ENCODE measurements at regions of chr2 and their contacts with region 1.

Region 1: DNA sequence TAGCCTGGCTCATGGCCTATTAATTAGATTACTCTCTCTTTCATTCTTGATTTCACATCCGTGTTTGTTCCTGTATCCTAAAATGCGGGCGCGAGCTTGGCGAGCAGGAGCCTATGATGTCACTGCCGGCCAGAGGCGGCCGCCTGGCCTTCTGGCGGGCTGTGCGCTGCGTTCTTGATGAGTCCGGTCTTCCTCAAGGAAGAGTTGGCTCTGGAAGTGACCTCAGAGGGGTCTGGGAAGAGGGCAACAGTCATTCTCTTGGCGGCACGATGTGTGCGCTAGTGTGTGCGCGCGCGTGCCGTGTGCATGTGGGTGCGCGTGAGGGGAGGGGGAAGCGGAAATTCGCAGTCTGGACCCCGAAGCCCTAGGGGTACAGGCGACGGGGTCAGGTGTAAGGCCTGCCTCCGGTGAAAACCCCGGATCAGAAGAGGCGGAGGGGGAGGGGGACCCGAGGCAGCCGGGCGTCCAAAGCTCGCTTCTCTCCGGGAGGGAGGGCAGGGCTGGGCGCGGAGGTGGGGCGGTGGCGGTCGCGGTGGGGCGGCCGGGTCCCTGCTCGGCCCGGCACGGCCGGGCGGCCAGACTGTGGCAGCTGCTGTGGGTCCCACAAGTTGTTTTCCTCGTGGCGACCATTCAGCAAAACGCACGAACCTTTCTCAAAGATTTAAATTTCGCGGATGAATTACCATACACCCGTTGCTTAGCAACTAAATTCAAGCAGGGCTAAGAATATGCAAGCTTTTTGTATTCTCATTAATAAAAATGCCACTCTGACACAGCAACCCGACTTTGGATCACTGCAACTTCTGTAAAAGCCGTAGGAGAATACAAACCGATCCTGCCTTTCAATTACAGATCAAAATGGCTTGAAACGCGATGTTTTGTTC is 8.4 kb downstream of the POU3F3 start:
- DNase-seq: no peak
- H3K4me3 Mint-ChIP-seq: no peak overlapping the region
- H3K27ac Mint-ChIP-seq: peak overlapping the region; percentile 40
- H3K4me1 Mint-ChIP-seq: peaks cover 5% of the 10 kb centered on the region
- H3K27me3 Mint-ChIP-seq: peaks cover 88% of the 10 kb centered on the region

Region 2: DNA sequence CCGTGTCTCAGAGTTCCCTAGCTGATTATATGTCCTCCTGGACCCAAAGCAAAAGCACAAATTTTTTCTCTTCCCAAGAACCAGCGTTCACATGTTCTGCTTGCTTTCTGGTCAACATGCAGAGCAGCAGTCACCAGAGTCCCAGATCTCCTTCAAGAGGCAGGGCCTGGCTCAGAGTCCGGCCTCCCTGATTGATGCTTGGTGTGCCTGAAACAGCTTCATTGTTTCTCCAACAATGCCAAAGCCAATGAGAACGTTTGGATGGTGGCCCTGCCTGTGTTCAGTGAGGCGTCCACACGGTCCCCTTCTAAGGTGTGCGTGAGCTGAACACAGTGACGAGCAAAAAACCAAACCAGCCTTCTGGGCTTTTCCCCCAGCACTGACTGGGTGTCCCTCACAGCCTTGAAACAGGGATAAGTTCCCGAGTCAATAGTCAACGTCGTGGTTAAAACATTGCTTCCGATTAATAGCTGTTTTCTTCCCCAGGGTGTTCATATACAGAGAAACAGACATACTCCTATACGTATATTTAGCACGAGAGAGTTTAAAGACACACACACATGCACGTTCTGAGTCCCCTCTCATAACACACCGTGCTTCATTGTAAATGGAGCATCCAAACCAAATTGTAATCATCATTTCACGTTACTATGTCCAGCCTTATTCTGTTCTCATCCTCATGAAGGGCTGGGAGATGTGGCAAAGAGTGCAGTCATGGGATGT is 27.7 kb before region 1 on chr2:
- CTCF ChIA-PET with region 1: no interaction called
- POLR2A ChIA-PET with region 1: no interaction called
- DNase-seq: no peak
- H3K4me3 Mint-ChIP-seq: no peak overlapping the region
- H3K27ac Mint-ChIP-seq: no peak overlapping the region
- H3K4me1 Mint-ChIP-seq: no peaks in the 10 kb centered on the region
- H3K27me3 Mint-ChIP-seq: peaks cover 3% of the 10 kb centered on the region

Region 3: DNA sequence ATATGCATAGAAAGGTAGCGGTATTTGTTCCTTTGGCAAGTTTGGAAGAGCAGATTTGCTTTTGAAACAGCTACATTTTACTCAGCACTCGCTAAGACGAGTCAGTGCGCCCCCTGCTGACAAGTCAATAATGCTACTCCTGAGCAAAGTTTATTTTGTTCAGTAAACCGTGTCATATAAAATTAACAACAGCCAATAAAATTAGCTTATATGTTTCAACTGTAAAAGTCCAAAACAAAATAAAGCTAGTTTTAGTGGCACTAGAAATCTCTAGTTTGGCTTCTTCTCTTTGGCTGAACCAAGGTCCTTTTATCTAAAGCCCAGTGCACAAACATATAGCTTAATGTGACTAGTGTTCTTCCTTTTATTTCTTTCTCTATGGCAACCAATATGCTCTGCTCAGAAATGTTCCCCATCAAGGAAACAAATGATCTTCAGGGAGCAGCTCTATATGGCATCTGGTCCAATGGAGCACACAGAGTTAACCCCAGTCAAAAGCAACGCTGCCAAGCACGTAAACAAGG is 12.6 kb before region 1 on chr2:
- CTCF ChIA-PET with region 1: interaction called, 14 read pairs
- POLR2A ChIA-PET with region 1: interaction called, 3 read pairs
- DNase-seq: peak; percentile 63
- H3K4me3 Mint-ChIP-seq: no peak overlapping the region
- H3K27ac Mint-ChIP-seq: no peak overlapping the region
- H3K4me1 Mint-ChIP-seq: peaks cover 23% of the 10 kb centered on the region
- H3K27me3 Mint-ChIP-seq: peaks cover 93% of the 10 kb centered on the region

Measured in activated CD4-positive, alpha-beta memory T cell treated with anti-CD3 and anti-CD28 coated beads, Interleukin-2, amount 10 ng/mL, durations not matched to agents 7 days and 5 days (primary cell).